GM12878 (cell line): ENCODE measurements at regions of chr18 and their contacts with region 1.

Region 1: GRCh38 chr18:48951448-48952286 is 902 bp upstream of the SMAD7 start:
- DNase-seq: no peak
- ATAC-seq: peak; percentile 64
- H3K4me3 ChIP-seq: peak overlapping the region; percentile 92
- H3K27ac ChIP-seq: peak overlapping the region; percentile 64
- H3K4me1 ChIP-seq: peaks cover 10% of the 10 kb centered on the region
- H3K27me3 ChIP-seq: no peaks in the 10 kb centered on the region
- CTCF ChIP-seq: peak in 2 of 3 experiments; percentile 21 to 22; a peak in 3 of 6 replicates
- EP300 ChIP-seq: 0 out of 4 replicates have a peak, but pooled peaks of 1 of the 2 experiments have one; percentile 13
- POLR2A ChIP-seq: peak; percentile 86
- RAD21 ChIP-seq: 0 out of 2 replicates have a peak, but pooled peaks have one; percentile 23

Region 2: GRCh38 chr18:48800876-48801727 is 150.6 kb before region 1 on chr18:
- CTCF ChIA-PET with region 1: no interaction called
- POLR2A ChIA-PET with region 1: interaction called, 4 read pairs
- RAD21 ChIA-PET with region 1: interaction called, 12 read pairs
- SMC1A ChIA-PET with region 1: interaction called, 5 read pairs
- in situ Hi-C with region 1: no loop called
- intact Hi-C with region 1: no loop called
- DNase-seq: peak; percentile 89
- ATAC-seq: peak; percentile 87
- H3K4me3 ChIP-seq: peak overlapping the region; percentile 36; the same call in 1 of the 2 replicates
- H3K27ac ChIP-seq: peak overlapping the region; percentile 92
- H3K4me1 ChIP-seq: peaks cover 52% of the 10 kb centered on the region
- H3K27me3 ChIP-seq: no peaks in the 10 kb centered on the region
- CTCF ChIP-seq: no peak
- EP300 ChIP-seq: peak; percentile 87 to 93
- POLR2A ChIP-seq: peak; percentile 60; the same call in 1 of the 2 replicates
- RAD21 ChIP-seq: no peak

Region 3: DNA sequence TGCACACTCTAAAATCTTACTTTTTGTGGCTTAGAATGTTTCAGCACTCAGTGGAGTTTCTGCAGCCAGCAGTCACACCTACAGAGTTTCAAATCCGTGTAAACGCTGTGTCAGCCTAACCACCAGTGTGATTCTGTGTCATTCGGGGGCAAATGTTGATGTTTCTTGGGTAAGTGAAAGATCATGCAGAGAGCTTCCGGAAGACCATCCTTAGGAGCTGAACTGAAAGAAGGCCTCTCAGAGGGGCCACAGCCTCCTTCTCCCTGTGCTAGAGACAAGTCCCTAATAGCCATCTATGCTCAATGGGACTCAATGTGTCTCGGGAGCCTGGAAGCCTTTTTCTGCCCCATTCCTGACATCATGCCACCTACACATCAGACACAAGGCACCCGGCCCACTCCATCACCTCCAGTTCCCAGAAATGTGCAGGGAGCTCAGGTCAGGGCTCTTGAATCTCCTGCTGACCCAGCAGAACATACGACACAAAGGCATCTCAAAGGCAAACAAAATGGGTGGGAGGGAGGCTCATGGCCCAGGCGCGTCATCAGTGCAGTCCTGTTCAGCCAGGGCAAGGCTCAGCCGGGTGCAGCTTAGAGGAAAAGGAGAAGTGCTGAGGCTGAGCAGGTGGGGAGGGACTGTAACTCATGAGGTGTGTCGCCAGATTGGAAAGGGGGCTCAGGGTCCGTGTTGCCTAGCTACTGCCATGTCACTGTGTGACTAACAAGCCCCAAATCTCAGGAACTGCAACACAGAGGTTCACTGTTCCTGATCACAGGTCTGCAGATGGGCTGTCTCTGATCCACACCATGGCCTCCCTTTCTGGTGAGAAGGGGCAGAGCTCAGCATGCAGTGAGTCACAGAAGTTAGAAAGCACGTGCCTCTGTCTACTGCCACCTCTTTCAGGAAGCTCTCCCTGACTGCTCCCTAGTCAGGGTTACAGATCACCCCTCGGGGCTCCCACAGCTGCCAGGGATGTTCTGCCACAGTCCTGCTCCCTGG is 82.9 kb before region 1 on chr18:
- CTCF ChIA-PET with region 1: no interaction called
- POLR2A ChIA-PET with region 1: interaction called, 6 read pairs
- RAD21 ChIA-PET with region 1: interaction called, 17 read pairs
- SMC1A ChIA-PET with region 1: interaction called, 16 read pairs
- in situ Hi-C with region 1: no loop called
- intact Hi-C with region 1: no loop called
- DNase-seq: peak; percentile 96
- ATAC-seq: peak; percentile 92
- H3K4me3 ChIP-seq: 0 out of 2 replicates have a peak overlapping the region, but pooled peaks have one; percentile 20
- H3K27ac ChIP-seq: peak overlapping the region; percentile 97
- H3K4me1 ChIP-seq: peaks cover 29% of the 10 kb centered on the region
- H3K27me3 ChIP-seq: no peaks in the 10 kb centered on the region
- CTCF ChIP-seq: no peak
- EP300 ChIP-seq: peak; percentile 84 to 93
- POLR2A ChIP-seq: peak; percentile 73
- RAD21 ChIP-seq: peak; percentile 28; the same call in 1 of the 2 replicates

Region 4: GRCh38 chr18:48928787-48929186 is 22.9 kb before region 1 on chr18:
- CTCF ChIA-PET with region 1: interaction called, 5 read pairs
- POLR2A ChIA-PET with region 1: interaction called, 71 read pairs
- RAD21 ChIA-PET with region 1: interaction called, 41 read pairs
- SMC1A ChIA-PET with region 1: interaction called, 55 read pairs
- in situ Hi-C with region 1: no loop called
- intact Hi-C with region 1: no loop called
- DNase-seq: peak; percentile 72
- ATAC-seq: peak; percentile 86
- H3K4me3 ChIP-seq: peak overlapping the region; percentile 11; the same call in 1 of the 2 replicates
- H3K27ac ChIP-seq: peak overlapping the region; percentile 49
- H3K4me1 ChIP-seq: peaks cover 72% of the 10 kb centered on the region
- H3K27me3 ChIP-seq: no peaks in the 10 kb centered on the region
- CTCF ChIP-seq: no peak
- EP300 ChIP-seq: no peak
- POLR2A ChIP-seq: peak; percentile 70
- RAD21 ChIP-seq: no peak

Region 5: GRCh38 chr18:48940854-48941611 is 10.6 kb before region 1 on chr18:
- CTCF ChIA-PET with region 1: interaction called, 8 read pairs
- POLR2A ChIA-PET with region 1: interaction called, 7 read pairs
- RAD21 ChIA-PET with region 1: interaction called, 9 read pairs
- SMC1A ChIA-PET with region 1: interaction called, 14 read pairs
- in situ Hi-C with region 1: no loop called
- intact Hi-C with region 1: no loop called
- DNase-seq: peak; percentile 62
- ATAC-seq: peak; percentile 74
- H3K4me3 ChIP-seq: peak overlapping the region; percentile 35; the same call in 1 of the 2 replicates
- H3K27ac ChIP-seq: peak overlapping the region; percentile 63
- H3K4me1 ChIP-seq: peaks cover 41% of the 10 kb centered on the region
- H3K27me3 ChIP-seq: no peaks in the 10 kb centered on the region
- CTCF ChIP-seq: no peak
- EP300 ChIP-seq: no peak
- POLR2A ChIP-seq: no peak
- RAD21 ChIP-seq: no peak

Region 6: GRCh38 chr18:49127471-49128190 is 176.0 kb after region 1 on chr18:
- CTCF ChIA-PET with region 1: no interaction called
- POLR2A ChIA-PET with region 1: no interaction called
- RAD21 ChIA-PET with region 1: no interaction called
- SMC1A ChIA-PET with region 1: no interaction called
- in situ Hi-C with region 1: no loop called
- intact Hi-C with region 1: no loop called
- DNase-seq: no peak
- ATAC-seq: no peak
- H3K4me3 ChIP-seq: no peak overlapping the region
- H3K27ac ChIP-seq: no peak overlapping the region
- H3K4me1 ChIP-seq: no peaks in the 10 kb centered on the region
- H3K27me3 ChIP-seq: no peaks in the 10 kb centered on the region
- CTCF ChIP-seq: no peak
- EP300 ChIP-seq: no peak
- POLR2A ChIP-seq: no peak
- RAD21 ChIP-seq: no peak

Region 7: GRCh38 chr18:49178736-49179135 is 227.1 kb after region 1 on chr18:
- CTCF ChIA-PET with region 1: interaction called, 3 read pairs
- POLR2A ChIA-PET with region 1: no interaction called
- RAD21 ChIA-PET with region 1: interaction called, 5 read pairs
- SMC1A ChIA-PET with region 1: interaction called, 7 read pairs
- in situ Hi-C with region 1: loop called (anchors 10 kb)
- intact Hi-C with region 1: no loop called
- DNase-seq: no peak
- ATAC-seq: peak; percentile 71
- H3K4me3 ChIP-seq: no peak overlapping the region
- H3K27ac ChIP-seq: no peak overlapping the region
- H3K4me1 ChIP-seq: peaks cover 9% of the 10 kb centered on the region; the same call in 1 of the 2 replicates
- H3K27me3 ChIP-seq: no peaks in the 10 kb centered on the region
- CTCF ChIP-seq: peak; percentile 49 to 62 (median 56); a peak in 5 of 6 replicates
- EP300 ChIP-seq: no peak
- POLR2A ChIP-seq: no peak
- RAD21 ChIP-seq: peak; percentile 83